Activated CD4-positive, alpha-beta memory T cell treated with anti-CD3 and anti-CD28 coated beads for 36 hours (primary cell): ENCODE measurements at regions of chr1 and their contacts with region 1.

Region 1: DNA sequence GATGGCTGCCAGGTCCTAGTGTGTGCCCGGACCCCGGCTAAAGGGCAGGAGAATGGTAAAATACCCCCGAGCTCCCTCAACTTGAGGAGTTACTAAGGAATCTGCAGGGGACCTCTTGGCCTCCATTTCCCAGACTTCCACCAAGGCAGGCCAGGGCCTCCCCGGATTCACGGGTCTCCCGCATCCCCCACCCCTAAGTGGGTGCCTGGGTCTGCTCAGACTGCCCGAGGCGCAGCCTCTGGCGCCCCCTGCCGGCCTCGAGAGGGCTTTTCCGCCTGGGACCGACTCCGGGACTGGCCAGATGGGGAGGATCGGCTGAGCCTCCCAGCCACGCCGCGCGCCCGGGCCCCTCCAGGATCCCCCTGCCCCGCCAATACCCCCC is 1.7 kb downstream of the PLEKHG5 start:
- DNase-seq: peak; percentile 87
- H3K4me3 Mint-ChIP-seq: peak overlapping the region; percentile 74
- H3K27ac Mint-ChIP-seq: peak overlapping the region; percentile 42
- H3K4me1 Mint-ChIP-seq: peaks cover 21% of the 10 kb centered on the region
- H3K27me3 Mint-ChIP-seq: peaks cover 8% of the 10 kb centered on the region

Region 2: DNA sequence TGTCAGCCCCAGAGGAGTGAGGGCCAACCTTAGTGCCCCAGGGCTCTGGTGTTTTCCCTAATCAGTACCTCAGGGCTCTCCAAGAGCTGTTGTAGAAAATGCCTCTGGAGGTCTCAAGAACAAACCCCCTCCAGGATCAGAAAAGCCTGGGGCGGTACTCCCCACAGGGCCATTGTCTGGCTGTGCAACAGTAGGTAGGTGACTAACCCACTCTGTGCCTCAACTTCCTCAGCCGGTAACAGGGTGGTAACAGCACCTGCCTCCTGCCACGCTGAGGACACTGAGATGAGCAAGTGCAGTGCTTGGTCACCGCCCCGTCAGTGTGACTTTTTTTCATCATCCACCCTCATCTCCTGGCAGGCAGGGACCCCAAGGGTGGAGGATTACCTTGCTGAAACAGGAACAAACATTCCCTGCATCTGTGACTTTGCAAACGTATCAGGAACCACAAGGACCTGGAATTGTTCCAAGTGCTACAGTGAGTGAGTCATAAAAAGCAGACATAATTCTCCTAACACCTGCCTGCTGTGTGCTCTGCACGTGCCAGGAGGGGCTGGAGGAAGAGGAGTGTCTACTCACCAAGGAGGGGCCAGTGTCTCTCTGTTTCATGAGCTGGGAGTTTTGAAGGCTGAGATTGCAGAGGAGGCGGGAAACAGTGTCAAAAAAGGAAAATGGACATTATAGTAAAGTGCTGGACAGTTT is 938.4 kb before region 1 on chr1:
- CTCF ChIA-PET with region 1: no interaction called
- POLR2A ChIA-PET with region 1: no interaction called
- intact Hi-C with region 1: no loop called
- DNase-seq: no peak
- H3K4me3 Mint-ChIP-seq: no peak overlapping the region
- H3K27ac Mint-ChIP-seq: no peak overlapping the region
- H3K4me1 Mint-ChIP-seq: peaks cover 3% of the 10 kb centered on the region
- H3K27me3 Mint-ChIP-seq: peaks cover 12% of the 10 kb centered on the region

Region 3: GRCh38 chr1:6624710-6625583 is 135.2 kb after region 1 on chr1 and contains the start of gene THAP3:
- CTCF ChIA-PET with region 1: interaction called, 3 read pairs
- POLR2A ChIA-PET with region 1: no interaction called
- intact Hi-C with region 1: loop called (anchors 5 kb)
- DNase-seq: peak; percentile 93
- H3K4me3 Mint-ChIP-seq: peak within 1 kb of the TSS; percentile 91
- H3K27ac Mint-ChIP-seq: peak within 1 kb of the TSS; percentile 71
- H3K4me1 Mint-ChIP-seq: peaks cover 25% of the 10 kb centered on the region
- H3K27me3 Mint-ChIP-seq: no peaks in the 10 kb centered on the region
- total RNA-seq, gene THAP3: 22.8 TPM

Region 4: DNA sequence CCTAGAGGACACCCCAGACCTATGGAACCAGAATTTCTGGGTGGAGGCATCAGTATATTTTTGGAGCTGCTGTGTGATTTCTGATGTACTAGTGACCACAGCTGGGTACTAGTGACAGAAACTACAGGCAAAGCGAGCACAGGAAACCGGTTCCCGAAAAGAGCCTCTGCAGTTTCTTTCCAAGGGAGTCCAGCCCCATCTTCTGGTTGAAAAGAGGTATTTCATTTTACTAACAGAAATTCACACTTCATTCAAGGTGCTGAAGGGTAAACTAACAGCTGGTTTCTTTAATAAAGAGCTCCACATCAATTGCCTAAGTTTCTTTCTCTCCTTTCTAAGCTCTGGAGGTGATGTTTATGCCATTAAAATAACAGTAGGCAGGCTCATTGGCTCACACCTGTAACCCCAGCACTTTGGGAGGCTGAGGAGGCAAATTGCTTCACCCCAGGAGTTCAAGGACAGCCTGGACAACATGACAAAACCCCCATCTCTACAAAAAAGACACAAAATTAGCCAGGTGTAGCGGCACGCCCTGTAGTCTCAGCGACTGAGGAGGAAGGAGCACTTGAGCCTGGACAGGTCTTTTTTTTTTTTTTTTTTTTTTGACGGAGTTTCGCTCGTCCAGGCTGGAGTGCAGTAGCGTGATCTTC is 156.8 kb after region 1 on chr1:
- CTCF ChIA-PET with region 1: interaction called, 13 read pairs
- POLR2A ChIA-PET with region 1: no interaction called
- intact Hi-C with region 1: loop called (anchors 1 kb)
- DNase-seq: peak; percentile 34
- H3K4me3 Mint-ChIP-seq: no peak overlapping the region
- H3K27ac Mint-ChIP-seq: no peak overlapping the region
- H3K4me1 Mint-ChIP-seq: no peaks in the 10 kb centered on the region
- H3K27me3 Mint-ChIP-seq: no peaks in the 10 kb centered on the region